Activated CD4-positive, alpha-beta T cell treated with anti-CD3 and anti-CD28 coated beads, Interleukin-2, amount 10 ng/mL, durations not matched to agents 24 days and 14 days (primary cell): ENCODE measurements at regions of chr7 and their contacts with region 1.

Region 1: DNA sequence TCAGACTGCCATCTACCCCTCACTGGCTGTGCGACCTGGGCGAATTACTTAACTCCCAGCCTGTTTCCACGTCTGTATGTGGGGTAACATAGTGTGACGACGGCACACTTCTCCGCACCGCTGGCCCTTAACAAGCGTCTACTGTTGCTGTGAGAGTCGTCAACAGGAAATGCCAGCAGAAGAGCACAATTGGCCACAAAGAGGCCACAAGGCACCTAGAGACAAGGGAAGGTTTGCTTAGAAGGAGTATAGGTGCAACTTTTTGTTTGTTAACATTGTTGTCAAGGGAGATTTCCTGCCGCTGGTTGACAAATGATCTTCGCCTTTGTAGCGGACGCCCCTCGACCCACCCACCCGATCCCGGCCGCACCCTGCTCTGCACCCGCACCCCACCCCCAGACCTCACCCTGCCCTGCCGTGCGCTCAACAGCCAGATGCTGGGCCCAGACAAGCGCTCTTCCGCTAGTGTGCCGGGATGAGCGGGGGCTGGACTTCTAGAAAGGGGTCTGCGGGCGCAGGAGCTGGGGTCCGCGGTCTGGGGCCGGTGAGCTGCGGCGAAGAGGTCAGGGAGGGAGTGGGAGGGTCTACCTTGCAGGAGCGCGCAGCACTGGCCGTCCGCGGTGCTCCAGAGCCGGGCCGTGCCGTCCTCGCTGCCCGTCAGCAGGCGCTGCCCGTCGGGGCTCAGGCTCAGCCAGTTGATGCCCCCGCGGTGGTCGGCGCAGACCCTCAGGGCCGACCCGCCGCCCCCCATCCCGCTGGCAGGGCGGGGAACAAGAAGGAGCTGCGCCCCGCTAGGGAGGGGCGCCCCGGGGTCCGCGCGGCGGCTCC is 785 bp downstream of the WDR86 start:
- DNase-seq: peak; percentile 83
- H3K4me3 Mint-ChIP-seq: peak overlapping the region; percentile 52
- H3K27ac Mint-ChIP-seq: no peak overlapping the region
- H3K4me1 Mint-ChIP-seq: peaks cover 14% of the 10 kb centered on the region
- H3K27me3 Mint-ChIP-seq: peaks cover 52% of the 10 kb centered on the region

Region 2: DNA sequence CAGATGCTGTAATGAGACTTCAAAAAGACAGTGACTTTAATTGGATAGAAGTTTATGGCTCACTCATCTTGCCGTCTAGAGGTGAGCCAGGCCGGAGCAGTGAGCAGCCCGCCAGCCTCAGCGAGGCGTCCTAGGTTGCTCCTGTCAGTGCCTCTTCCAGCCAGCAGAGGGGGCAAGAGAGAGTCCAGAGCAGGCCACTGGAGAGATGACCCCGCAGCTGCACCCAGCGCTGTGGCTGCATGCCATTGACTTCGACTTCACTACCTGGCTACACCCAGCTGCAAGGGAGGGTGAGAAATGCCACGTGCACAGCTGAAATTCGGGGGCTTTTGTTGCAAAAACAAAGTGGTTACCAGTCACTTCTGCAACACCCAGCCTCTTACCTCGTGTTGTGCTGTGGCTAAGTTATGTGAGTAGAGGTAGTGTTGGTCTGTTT is 40.9 kb before region 1 on chr7:
- intact Hi-C with region 1: loop called (anchors 5 kb)
- DNase-seq: peak; percentile 93
- H3K4me3 Mint-ChIP-seq: no peak overlapping the region
- H3K27ac Mint-ChIP-seq: no peak overlapping the region
- H3K4me1 Mint-ChIP-seq: peaks cover 5% of the 10 kb centered on the region
- H3K27me3 Mint-ChIP-seq: no peaks in the 10 kb centered on the region

Region 3: GRCh38 chr7:151381348-151382078 is 27.5 kb before region 1 on chr7:
- intact Hi-C with region 1: loop called (anchors 2 kb)
- DNase-seq: peak; percentile 62
- H3K4me3 Mint-ChIP-seq: no peak overlapping the region
- H3K27ac Mint-ChIP-seq: no peak overlapping the region
- H3K4me1 Mint-ChIP-seq: peaks cover 5% of the 10 kb centered on the region
- H3K27me3 Mint-ChIP-seq: peaks cover 26% of the 10 kb centered on the region

Region 4: GRCh38 chr7:151424461-151425198 is 15.6 kb after region 1 on chr7:
- intact Hi-C with region 1: no loop called
- DNase-seq: no peak
- H3K4me3 Mint-ChIP-seq: no peak overlapping the region
- H3K27ac Mint-ChIP-seq: no peak overlapping the region
- H3K4me1 Mint-ChIP-seq: peaks cover 11% of the 10 kb centered on the region
- H3K27me3 Mint-ChIP-seq: peaks cover 30% of the 10 kb centered on the region

Region 5: DNA sequence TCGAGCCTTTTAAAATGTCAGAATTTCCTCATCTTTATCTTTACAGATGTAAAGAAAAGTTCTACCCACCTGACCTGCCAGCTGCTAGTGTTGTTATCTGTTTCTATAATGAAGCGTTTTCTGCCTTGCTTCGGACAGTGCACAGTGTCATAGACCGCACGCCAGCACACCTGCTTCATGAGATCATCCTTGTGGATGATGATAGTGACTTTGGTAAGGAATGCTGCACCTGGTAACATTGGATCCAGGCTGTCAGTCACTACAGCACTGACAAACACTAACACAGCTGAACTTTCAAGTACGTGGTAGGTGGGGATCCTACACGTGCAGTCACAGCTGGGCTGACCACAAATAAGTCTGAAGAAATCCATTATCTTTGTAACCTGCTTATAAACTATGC is 694.0 kb after region 1 on chr7:
- intact Hi-C with region 1: no loop called
- DNase-seq: no peak
- H3K4me3 Mint-ChIP-seq: no peak overlapping the region
- H3K27ac Mint-ChIP-seq: no peak overlapping the region
- H3K4me1 Mint-ChIP-seq: no peaks in the 10 kb centered on the region
- H3K27me3 Mint-ChIP-seq: no peaks in the 10 kb centered on the region